Psoas muscle (tissue), 8 donors: ENCODE measurements at regions of chr16 and their contacts with region 1.

Region 1: GRCh38 chr16:54921206-54921824 is 9.3 kb upstream of the IRX5 start:
- DNase-seq: no peak
- ATAC-seq: peak in 3 of 4 donors; percentile 56 to 71 (median 68)
- H3K4me3 ChIP-seq: no peak overlapping the region
- H3K27ac ChIP-seq: peak overlapping the region; percentile 97
- H3K4me1 ChIP-seq: peaks cover 55% of the 10 kb centered on the region
- H3K27me3 ChIP-seq: no peaks in the 10 kb centered on the region
- CTCF ChIP-seq: no peak

Region 2: DNA sequence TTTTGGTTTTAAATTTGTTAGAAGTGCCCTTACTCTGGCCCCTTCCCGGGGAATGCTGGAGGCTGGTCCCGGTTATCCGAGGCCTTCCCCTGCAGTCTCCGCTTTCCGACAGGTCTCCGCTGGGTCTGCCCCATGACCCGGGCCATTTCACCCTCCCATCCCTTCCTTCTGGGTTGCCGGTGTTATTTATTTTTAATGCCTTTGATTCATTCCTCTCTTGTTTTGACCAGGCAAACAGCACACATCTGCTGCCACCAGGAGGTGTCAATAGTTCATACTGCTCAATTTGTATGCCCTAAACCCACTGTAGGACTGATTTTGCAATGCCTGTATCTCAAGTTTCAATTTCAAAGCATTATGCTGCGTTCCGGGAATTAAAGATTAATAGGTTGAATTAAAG is 103.9 kb before region 1 on chr16:
- intact Hi-C with region 1: loop called in 1 of 2 experiments (anchors 5 kb)
- DNase-seq: no peak
- ATAC-seq: peak in 3 of 4 donors; percentile 62 to 76 (median 73)
- H3K4me3 ChIP-seq: no peak overlapping the region
- H3K27ac ChIP-seq: no peak overlapping the region
- H3K4me1 ChIP-seq: no peaks in the 10 kb centered on the region
- H3K27me3 ChIP-seq: peaks cover 0 to 2% (median 0%) of the 10 kb centered on the region in 3 donors
- CTCF ChIP-seq: peak; percentile 56

Region 3: GRCh38 chr16:54936979-54937670 is 15.8 kb after region 1 on chr16:
- intact Hi-C with region 1: loop called in 1 of 2 experiments (anchors 1 kb)
- DNase-seq: peak in 1 of 2 donors; percentile 81
- ATAC-seq: peak; percentile 40 to 76 (median 71)
- H3K4me3 ChIP-seq: peak overlapping the region; percentile 89
- H3K27ac ChIP-seq: peak overlapping the region; percentile 77
- H3K4me1 ChIP-seq: peaks cover 6% of the 10 kb centered on the region
- H3K27me3 ChIP-seq: peaks cover 0 to 33% (median 3%) of the 10 kb centered on the region in 3 donors
- CTCF ChIP-seq: peak; percentile 55

Region 4: GRCh38 chr16:56311208-56312027 is 1390.1 kb after region 1 on chr16:
- intact Hi-C with region 1: no loop called
- DNase-seq: no peak
- ATAC-seq: no peak
- H3K4me3 ChIP-seq: no peak overlapping the region
- H3K27ac ChIP-seq: no peak overlapping the region
- H3K4me1 ChIP-seq: no peaks in the 10 kb centered on the region
- H3K27me3 ChIP-seq: no peaks in the 10 kb centered on the region
- CTCF ChIP-seq: no peak